Astrocyte of the cerebellum (primary cell): ENCODE measurements at regions of chr4 and their contacts with region 1.

Region 1: DNA sequence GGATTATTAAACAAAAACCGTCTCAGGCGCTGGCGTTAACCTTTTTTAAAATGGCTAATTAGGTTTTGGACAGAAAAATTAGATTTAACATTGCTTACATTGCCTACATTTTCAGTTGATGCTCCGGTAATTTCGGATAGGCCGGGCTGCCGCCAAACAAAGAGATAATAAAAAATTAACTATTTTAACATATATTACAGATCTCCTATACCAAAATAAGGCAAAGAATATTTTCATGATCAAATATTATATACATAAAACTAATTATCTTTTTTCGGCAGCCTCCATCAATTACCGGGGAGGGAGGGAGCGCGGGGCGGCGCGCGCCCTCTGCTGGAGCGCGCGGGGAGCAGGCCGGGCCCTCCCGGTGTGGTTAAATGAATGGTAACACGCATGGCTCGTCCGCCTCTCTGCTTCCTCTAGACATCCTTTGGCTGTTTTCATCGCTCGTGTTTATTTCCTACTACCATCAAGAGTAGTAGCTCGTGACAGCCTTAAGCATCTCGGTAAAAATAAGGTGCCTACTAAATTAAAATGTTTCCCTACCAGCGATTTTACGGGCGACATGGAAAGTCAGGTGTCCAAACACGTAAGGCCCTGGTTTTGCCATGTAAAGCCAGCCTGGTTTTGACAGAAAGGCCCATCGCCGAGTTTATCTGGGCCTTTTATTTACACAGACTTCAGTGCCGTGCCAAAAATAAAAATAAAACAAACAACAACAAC is 52.4 kb upstream of the TMEM33 start:
- DNase-seq: no peak
- H3K4me3 ChIP-seq: peak overlapping the region; percentile 4
- CTCF ChIP-seq: peak; percentile 99

Region 2: GRCh38 chr4:41281038-41281634 is 601.6 kb before region 1 on chr4:
- in situ Hi-C with region 1: loop called (anchors 25 kb)
- DNase-seq: peak; percentile 77
- H3K4me3 ChIP-seq: no peak overlapping the region
- CTCF ChIP-seq: peak; percentile 73

Region 3: GRCh38 chr4:41709844-41710481 is 172.8 kb before region 1 on chr4:
- in situ Hi-C with region 1: loop called (anchors 25 kb)
- DNase-seq: peak; percentile 54
- H3K4me3 ChIP-seq: no peak overlapping the region
- CTCF ChIP-seq: no peak

Region 4: GRCh38 chr4:41797260-41797659 is 85.5 kb before region 1 on chr4:
- in situ Hi-C with region 1: no loop called
- DNase-seq: no peak
- H3K4me3 ChIP-seq: no peak overlapping the region
- CTCF ChIP-seq: no peak